Activated T-helper 1 cell treated with anti-CD3 and anti-CD28 coated beads, Interleukin-12 subunit alpha, Interleukin-12 subunit beta, Interleukin-2, Interleukin-4 antibody, amounts not matched to agents 30 ng/mL and 10 ng/mL and 1 ng/mL, durations not matched to agents 14 hours and 24 hours and 36 hours (primary cell): ENCODE measurements at regions of chr9 and their contacts with region 1.

Region 1: GRCh38 chr9:97638666-97639065 is 5.0 kb downstream of the NCBP1 start:
- DNase-seq: no peak
- H3K4me3 Mint-ChIP-seq: no peak overlapping the region
- H3K27ac Mint-ChIP-seq: no peak overlapping the region
- H3K4me1 Mint-ChIP-seq: peaks cover 58% of the 10 kb centered on the region
- H3K27me3 Mint-ChIP-seq: no peaks in the 10 kb centered on the region

Region 2: GRCh38 chr9:97468658-97469448 is 169.8 kb before region 1 on chr9:
- intact Hi-C with region 1: no loop called
- DNase-seq: peak; percentile 4
- H3K4me3 Mint-ChIP-seq: no peak overlapping the region
- H3K27ac Mint-ChIP-seq: no peak overlapping the region
- H3K4me1 Mint-ChIP-seq: no peaks in the 10 kb centered on the region
- H3K27me3 Mint-ChIP-seq: no peaks in the 10 kb centered on the region

Region 3: GRCh38 chr9:97682242-97682641 is 43.6 kb after region 1 on chr9:
- intact Hi-C with region 1: loop called (anchors 5 kb)
- DNase-seq: no peak
- H3K4me3 Mint-ChIP-seq: no peak overlapping the region
- H3K27ac Mint-ChIP-seq: no peak overlapping the region
- H3K4me1 Mint-ChIP-seq: peaks cover 5% of the 10 kb centered on the region
- H3K27me3 Mint-ChIP-seq: no peaks in the 10 kb centered on the region

Region 4: GRCh38 chr9:97845130-97845529 is 206.5 kb after region 1 on chr9:
- intact Hi-C with region 1: no loop called
- DNase-seq: no peak
- H3K4me3 Mint-ChIP-seq: no peak overlapping the region
- H3K27ac Mint-ChIP-seq: no peak overlapping the region
- H3K4me1 Mint-ChIP-seq: peaks cover 10% of the 10 kb centered on the region
- H3K27me3 Mint-ChIP-seq: peaks cover 81% of the 10 kb centered on the region

Region 5: GRCh38 chr9:98315551-98316060 is 676.9 kb after region 1 on chr9:
- intact Hi-C with region 1: no loop called
- DNase-seq: peak; percentile 62
- H3K4me3 Mint-ChIP-seq: no peak overlapping the region
- H3K27ac Mint-ChIP-seq: no peak overlapping the region
- H3K4me1 Mint-ChIP-seq: peaks cover 6% of the 10 kb centered on the region
- H3K27me3 Mint-ChIP-seq: peaks cover 4% of the 10 kb centered on the region